Mammary epithelial cell (primary cell): ENCODE measurements at regions of chr22 and their contacts with region 1.

Region 1: GRCh38 chr22:19097518-19097917 is 24.7 kb downstream of the DGCR2 start:
- DNase-seq: no peak
- H3K4me3 ChIP-seq: no peak overlapping the region
- H3K27ac ChIP-seq: no peak overlapping the region
- H3K4me1 ChIP-seq: peaks cover 13% of the 10 kb centered on the region
- H3K27me3 ChIP-seq: no peaks in the 10 kb centered on the region
- CTCF ChIP-seq: no peak

Region 2: GRCh38 chr22:19022755-19023154 is 74.8 kb before region 1 on chr22:
- CTCF ChIA-PET with region 1: no interaction called
- dilution Hi-C with region 1: no loop called
- in situ Hi-C with region 1: no loop called
- intact Hi-C with region 1: no loop called
- DNase-seq: no peak
- H3K4me3 ChIP-seq: no peak overlapping the region
- H3K27ac ChIP-seq: no peak overlapping the region
- H3K4me1 ChIP-seq: no peaks in the 10 kb centered on the region
- H3K27me3 ChIP-seq: peaks cover 2% of the 10 kb centered on the region
- CTCF ChIP-seq: no peak

Region 3: GRCh38 chr22:19043121-19044055 is 54.1 kb before region 1 on chr22:
- CTCF ChIA-PET with region 1: no interaction called
- dilution Hi-C with region 1: loop called (anchors 10 kb)
- in situ Hi-C with region 1: no loop called
- intact Hi-C with region 1: no loop called
- DNase-seq: no peak
- H3K4me3 ChIP-seq: no peak overlapping the region
- H3K27ac ChIP-seq: no peak overlapping the region
- H3K4me1 ChIP-seq: no peaks in the 10 kb centered on the region
- H3K27me3 ChIP-seq: no peaks in the 10 kb centered on the region
- CTCF ChIP-seq: no peak

Region 4: DNA sequence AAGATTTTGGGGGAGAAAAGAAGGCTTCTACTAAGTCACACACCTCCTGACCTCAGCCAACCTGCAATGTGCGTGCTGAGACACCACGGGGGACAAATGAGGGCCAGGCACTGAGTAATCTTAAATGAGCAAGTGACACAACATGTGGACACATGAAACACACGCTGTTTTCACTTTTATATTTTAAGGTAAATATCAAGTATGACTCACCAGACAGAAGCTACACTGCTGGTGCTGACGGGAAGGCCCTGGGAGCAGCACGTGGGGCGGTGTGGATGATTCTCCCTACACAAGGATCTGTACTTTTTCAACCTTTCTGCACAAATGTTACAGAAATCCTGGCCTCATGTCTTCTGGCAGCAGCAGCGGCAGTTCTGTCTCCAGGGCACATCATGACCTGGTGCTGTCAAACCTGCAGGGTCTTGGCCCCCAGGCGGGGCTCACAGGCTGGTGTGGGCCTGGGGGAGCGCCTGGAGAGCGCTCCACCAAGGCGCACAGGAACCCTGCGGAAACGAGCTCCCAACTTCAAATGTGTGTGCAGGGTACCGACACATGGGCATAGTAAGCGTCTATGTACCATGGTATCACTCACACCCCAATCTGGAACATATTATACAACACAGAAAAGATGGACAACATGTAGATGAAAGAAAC is 37.0 kb before region 1 on chr22:
- CTCF ChIA-PET with region 1: no interaction called
- dilution Hi-C with region 1: loop called (anchors 5 kb)
- in situ Hi-C with region 1: no loop called
- intact Hi-C with region 1: no loop called
- DNase-seq: peak; percentile 50
- H3K4me3 ChIP-seq: no peak overlapping the region
- H3K27ac ChIP-seq: no peak overlapping the region
- H3K4me1 ChIP-seq: peaks cover 10% of the 10 kb centered on the region
- H3K27me3 ChIP-seq: no peaks in the 10 kb centered on the region
- CTCF ChIP-seq: no peak

Region 5: GRCh38 chr22:19130959-19131684 is 33.6 kb after region 1 on chr22 and contains the start of gene TSSK2:
- CTCF ChIA-PET with region 1: no interaction called
- dilution Hi-C with region 1: loop called (anchors 5 kb)
- in situ Hi-C with region 1: no loop called
- intact Hi-C with region 1: no loop called
- DNase-seq: no peak
- H3K4me3 ChIP-seq: no peak within 1 kb of the TSS
- H3K27ac ChIP-seq: no peak within 1 kb of the TSS
- H3K4me1 ChIP-seq: peaks cover 15% of the 10 kb centered on the region
- H3K27me3 ChIP-seq: no peaks in the 10 kb centered on the region
- CTCF ChIP-seq: no peak
- total RNA-seq, gene TSSK2: 0.16 TPM in 1 of 2 donors, not detected in the other